Activated T-helper 2 cell treated with anti-CD3 and anti-CD28 coated beads, Interferon-gamma antibody, Interleukin-2, Interleukin-4, amounts not matched to agents 10 μg/mL and 5 μg/mL and 100 μg/mL, durations not matched to agents 14 hours and 24 hours and 36 hours (primary cell): ENCODE measurements at regions of chr10 and their contacts with region 1.

Region 1: GRCh38 chr10:70549962-70550458 is 52.5 kb downstream of the PRF1 start:
- DNase-seq: peak; percentile 56
- H3K4me3 Mint-ChIP-seq: no peak overlapping the region
- H3K27ac Mint-ChIP-seq: no peak overlapping the region
- H3K4me1 Mint-ChIP-seq: no peaks in the 10 kb centered on the region
- H3K27me3 Mint-ChIP-seq: no peaks in the 10 kb centered on the region

Region 2: GRCh38 chr10:70619271-70620019 is 69.4 kb after region 1 on chr10:
- intact Hi-C with region 1: loop called (anchors 2 kb)
- DNase-seq: no peak
- H3K4me3 Mint-ChIP-seq: no peak overlapping the region
- H3K27ac Mint-ChIP-seq: no peak overlapping the region
- H3K4me1 Mint-ChIP-seq: peaks cover 31% of the 10 kb centered on the region
- H3K27me3 Mint-ChIP-seq: no peaks in the 10 kb centered on the region

Region 3: GRCh38 chr10:70880077-70880534 is 330.1 kb after region 1 on chr10:
- intact Hi-C with region 1: loop called (anchors 5 kb)
- DNase-seq: peak; percentile 61
- H3K4me3 Mint-ChIP-seq: no peak overlapping the region
- H3K27ac Mint-ChIP-seq: peak overlapping the region; percentile 51
- H3K4me1 Mint-ChIP-seq: peaks cover 16% of the 10 kb centered on the region
- H3K27me3 Mint-ChIP-seq: no peaks in the 10 kb centered on the region